ENCODE measurements at regions of chr20 and their contacts with region 1.

Region 1: DNA sequence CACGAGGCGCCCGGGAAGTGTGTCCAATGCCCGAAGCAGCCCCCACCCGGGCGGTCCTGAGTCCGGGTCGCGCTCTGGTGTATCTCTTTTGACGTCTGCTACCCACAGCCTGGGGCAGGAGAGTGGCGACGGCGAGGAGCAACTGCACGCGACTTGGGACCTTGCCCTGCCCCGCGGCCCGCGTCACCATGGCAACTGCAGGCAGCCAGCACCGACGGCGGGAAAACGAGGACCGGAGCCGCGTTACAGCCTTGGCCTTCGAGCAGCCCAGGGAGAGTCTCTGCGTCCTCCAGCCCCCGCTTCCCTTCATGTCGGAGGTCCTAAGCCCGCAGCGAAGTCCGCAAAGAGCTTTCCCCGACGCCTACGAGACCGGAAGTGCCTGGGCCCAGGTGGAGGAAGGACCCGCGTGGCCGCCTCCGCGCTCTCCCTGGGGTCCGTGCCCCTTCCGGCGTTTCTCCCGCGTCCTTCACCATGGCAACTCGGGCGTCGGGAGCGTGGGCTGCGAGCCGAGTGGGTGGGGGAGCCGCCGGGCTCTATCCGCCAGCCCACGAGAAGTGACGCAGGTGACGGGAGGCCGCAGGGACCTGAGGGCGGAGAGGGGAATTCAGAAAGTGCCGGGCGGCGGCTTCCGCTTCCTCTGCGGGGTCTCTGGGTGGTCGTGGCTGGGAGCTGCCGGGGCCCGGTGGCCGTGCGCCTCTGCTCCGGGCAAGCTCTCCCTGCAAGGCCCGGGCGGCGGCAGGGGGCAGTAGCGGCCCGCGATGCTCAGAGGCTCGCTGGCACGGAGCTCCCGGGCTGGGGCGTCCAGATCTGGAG is 88.6 kb upstream of the TGM3 start:
- DNase-seq: peak; percentile 51 to 60
- H3K4me3 ChIP-seq: peak overlapping the region; percentile 6 to 46 (median 18)
- H3K27ac ChIP-seq: no peak overlapping the region
- H3K4me1 ChIP-seq: peaks cover 0 to 16% of the 10 kb centered on the region in 2 donors
- H3K27me3 ChIP-seq: no peaks in the 10 kb centered on the region
- CTCF ChIP-seq: peak in 5 of 6 experiments; percentile 14 to 72 (median 55)
- POLR2A ChIP-seq: no peak

Region 2: DNA sequence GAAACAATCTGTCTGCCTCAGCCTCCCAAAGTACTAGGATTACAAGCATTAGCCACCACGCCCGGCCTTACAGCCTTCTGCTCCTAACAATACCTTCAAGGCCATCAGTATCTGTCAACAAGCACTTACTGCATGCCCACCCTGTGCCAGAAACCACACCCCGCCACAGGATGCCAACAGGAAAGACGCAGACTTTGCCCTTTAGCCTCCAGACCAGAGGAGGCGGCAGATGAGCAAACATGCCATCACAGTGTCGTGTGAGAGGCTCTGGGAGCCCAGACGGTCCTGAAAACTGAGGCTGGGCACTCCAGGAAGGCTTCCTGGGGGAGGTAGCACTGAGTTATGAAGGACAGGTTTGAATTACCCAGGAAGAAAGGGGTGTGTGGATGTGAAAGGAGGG is 53.9 kb after region 1 on chr20:
- intact Hi-C with region 1: no loop called
- DNase-seq: no peak
- H3K4me3 ChIP-seq: no peak overlapping the region
- H3K27ac ChIP-seq: no peak overlapping the region
- H3K4me1 ChIP-seq: no peaks in the 10 kb centered on the region
- H3K27me3 ChIP-seq: no peaks in the 10 kb centered on the region
- CTCF ChIP-seq: no peak
- POLR2A ChIP-seq: no peak

Region 3: GRCh38 chr20:2349818-2350508 is 142.8 kb after region 1 on chr20:
- intact Hi-C with region 1: no loop called
- DNase-seq: no peak
- H3K4me3 ChIP-seq: no peak overlapping the region
- H3K27ac ChIP-seq: no peak overlapping the region
- H3K4me1 ChIP-seq: no peaks in the 10 kb centered on the region
- H3K27me3 ChIP-seq: no peaks in the 10 kb centered on the region
- CTCF ChIP-seq: no peak
- POLR2A ChIP-seq: no peak

Region 4: DNA sequence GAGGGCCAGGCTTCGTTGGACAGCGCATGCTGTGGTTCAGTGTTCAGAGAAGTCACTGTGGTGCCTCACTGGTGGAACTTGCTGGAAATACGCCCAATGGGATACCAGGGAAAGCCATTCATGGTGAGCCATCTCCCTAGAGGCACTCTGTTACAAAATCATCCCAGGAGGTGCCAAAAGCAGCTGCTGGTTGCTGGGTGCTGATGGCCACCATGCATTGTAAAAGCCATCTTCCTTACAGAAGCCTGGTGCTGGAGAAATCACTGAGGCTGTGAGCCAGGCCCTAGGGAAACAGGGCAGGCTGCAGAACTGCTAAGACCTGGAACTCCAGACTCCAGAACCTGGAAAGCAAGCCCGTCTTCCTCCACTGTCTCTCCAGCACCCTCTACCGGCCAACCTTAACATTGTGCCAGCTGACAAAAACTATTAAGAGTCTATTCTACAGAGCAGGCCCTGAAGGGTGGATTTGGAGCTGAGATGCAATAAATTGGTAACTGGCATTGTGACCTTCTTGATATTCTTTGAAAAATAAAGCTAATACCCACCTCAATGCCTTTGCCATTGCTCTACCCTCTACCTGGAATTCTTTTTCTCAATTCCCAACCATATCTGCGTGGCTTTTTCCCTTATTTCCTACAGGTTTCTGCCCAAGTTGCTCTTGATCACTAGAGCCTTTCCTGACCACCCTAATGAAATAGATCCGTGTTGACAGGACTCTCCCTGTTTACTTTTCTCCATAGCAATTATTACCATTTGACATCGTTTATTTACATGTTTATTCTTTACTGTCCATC is 245.0 kb after region 1 on chr20:
- intact Hi-C with region 1: loop called (anchors 10 kb)
- DNase-seq: peak; percentile 60 to 67
- H3K4me3 ChIP-seq: no peak overlapping the region
- H3K27ac ChIP-seq: no peak overlapping the region
- H3K4me1 ChIP-seq: no peaks in the 10 kb centered on the region
- H3K27me3 ChIP-seq: no peaks in the 10 kb centered on the region
- CTCF ChIP-seq: peak; percentile 33 to 82 (median 59)
- POLR2A ChIP-seq: no peak